Heart right ventricle (tissue), 16 donors: ENCODE measurements at regions of chr10 and their contacts with region 1.

Region 1: GRCh38 chr10:95214793-95215192 is 20.8 kb downstream of the ACSM6 start:
- DNase-seq: no peak
- ATAC-seq: no peak
- H3K4me3 ChIP-seq: no peak overlapping the region
- H3K27ac ChIP-seq: no peak overlapping the region
- H3K4me1 ChIP-seq: peaks cover 0 to 3% (median 0%) of the 10 kb centered on the region in 9 donors
- H3K27me3 ChIP-seq: no peaks in the 10 kb centered on the region
- CTCF ChIP-seq: no peak

Region 2: GRCh38 chr10:95618126-95618525 is 403.3 kb after region 1 on chr10:
- intact Hi-C with region 1: loop called in 1 of 10 experiments (anchors 10 kb)
- DNase-seq: no peak
- ATAC-seq: no peak
- H3K4me3 ChIP-seq: no peak overlapping the region
- H3K27ac ChIP-seq: no peak overlapping the region
- H3K4me1 ChIP-seq: no peaks in the 10 kb centered on the region
- H3K27me3 ChIP-seq: no peaks in the 10 kb centered on the region
- CTCF ChIP-seq: no peak